ENCODE measurements at regions of chr5 and their contacts with region 1.

Region 1: DNA sequence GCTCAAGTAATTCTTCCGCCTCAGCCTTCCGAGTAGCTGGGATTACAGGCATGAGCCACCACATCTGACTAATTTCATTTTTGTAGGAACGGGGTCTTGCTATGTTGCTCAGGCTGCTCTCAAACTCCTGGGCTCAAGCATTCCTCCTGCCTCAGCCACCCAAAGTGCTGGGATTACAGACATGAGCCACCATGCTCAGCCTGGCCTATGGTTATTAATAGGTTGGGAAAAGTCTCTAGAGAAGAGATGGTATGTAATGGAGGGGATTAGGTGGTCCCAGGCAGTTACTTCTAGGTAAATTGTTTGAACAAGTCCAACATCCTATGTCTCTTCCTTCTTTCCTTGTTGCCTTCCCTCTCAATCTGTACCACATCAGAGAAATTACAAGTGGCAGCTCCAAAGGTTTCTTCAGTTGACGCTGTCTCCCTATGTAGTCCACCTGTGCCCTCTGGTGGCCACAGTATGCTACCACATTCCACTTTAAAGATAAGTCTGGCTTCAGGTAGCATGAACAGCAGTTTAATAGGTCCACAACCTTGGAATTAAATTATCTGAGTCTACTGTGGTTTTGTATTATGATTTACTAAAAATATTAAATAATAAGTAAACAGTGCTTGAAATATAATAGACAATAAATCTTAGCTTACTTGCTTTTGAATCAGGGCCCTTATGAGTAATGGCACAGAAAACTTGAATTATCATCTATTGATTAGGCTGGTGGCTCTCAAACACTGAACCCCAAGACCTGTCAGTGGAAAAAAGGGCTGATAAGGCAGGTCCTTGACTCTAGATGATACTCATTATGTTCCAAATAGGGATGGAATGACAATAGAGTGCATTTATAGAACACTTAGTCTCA is 9.7 kb downstream of the TIGD6 start:
- DNase-seq: peak; percentile 70
- CTCF ChIP-seq: peak; percentile 90

Region 2: GRCh38 chr5:149618581-149619251 is 372.0 kb before region 1 on chr5:
- CTCF ChIA-PET with region 1: interaction called, 12 read pairs
- POLR2A ChIA-PET with region 1: no interaction called
- DNase-seq: peak; percentile 70
- CTCF ChIP-seq: peak; percentile 61

Region 3: DNA sequence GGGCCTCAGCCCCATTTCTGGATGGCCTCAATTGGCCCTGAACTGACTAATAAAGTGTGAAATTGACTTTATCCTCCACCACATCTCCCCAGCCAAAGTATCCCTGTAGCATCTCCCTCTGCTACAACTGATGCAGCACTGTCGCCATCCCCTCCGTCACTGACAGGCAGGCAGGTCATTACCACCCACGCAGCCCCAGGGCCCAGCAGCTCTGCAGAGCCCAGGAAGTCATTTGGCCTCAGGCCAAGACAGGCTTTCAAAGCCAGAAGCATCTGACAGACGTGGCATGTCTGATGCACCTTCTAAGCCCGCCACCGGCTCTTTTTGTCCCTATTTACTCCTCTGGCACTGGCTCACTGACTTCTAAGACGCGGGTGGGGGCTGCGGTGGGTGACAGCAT is 344.2 kb before region 1 on chr5:
- CTCF ChIA-PET with region 1: interaction called, 12 read pairs
- POLR2A ChIA-PET with region 1: no interaction called
- DNase-seq: no peak
- CTCF ChIP-seq: no peak

Region 4: GRCh38 chr5:149828161-149828884 is 162.4 kb before region 1 on chr5:
- CTCF ChIA-PET with region 1: interaction called, 68 read pairs
- POLR2A ChIA-PET with region 1: no interaction called
- DNase-seq: peak; percentile 84
- CTCF ChIP-seq: peak; percentile 82

Region 5: DNA sequence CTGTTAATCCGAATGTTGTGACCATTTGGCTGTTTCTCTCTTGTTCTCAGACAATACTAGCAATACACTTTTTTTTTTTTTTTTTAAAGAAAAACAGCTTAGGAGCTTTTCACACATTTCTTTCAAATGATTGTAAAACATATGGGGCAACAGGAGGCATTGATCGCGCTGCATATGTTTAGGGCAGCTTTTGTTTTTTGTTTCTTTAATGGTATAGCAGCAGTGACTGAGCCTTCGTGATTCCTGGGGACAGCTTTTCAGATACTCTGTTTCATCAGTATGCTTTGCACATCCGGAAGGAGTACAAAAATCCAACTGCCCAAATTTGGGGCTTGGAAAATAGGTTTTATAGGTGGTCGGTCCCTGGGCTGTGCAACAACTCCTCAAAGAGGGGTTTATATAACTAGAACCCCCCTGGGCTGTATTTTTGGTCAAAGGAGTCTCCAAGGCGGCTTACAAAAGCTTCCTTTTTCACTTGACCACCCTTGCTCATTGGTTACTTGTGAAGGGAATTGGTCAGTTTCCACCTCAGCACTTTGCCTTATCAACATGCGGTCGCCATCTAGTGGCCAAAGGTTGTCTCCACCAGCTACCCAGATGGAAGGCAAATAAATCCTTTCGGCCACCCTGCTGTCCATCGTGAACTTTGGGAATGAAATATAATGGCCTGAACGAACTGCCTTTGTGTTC is 138.0 kb before region 1 on chr5:
- CTCF ChIA-PET with region 1: interaction called, 24 read pairs
- POLR2A ChIA-PET with region 1: no interaction called
- DNase-seq: peak; percentile 71
- CTCF ChIP-seq: peak; percentile 87

Region 6: GRCh38 chr5:149940936-149941644 is 49.7 kb before region 1 on chr5:
- CTCF ChIA-PET with region 1: no interaction called
- POLR2A ChIA-PET with region 1: no interaction called
- DNase-seq: no peak
- CTCF ChIP-seq: no peak

Region 7: GRCh38 chr5:149969181-149969930 is 21.4 kb before region 1 on chr5:
- CTCF ChIA-PET with region 1: interaction called, 14 read pairs
- POLR2A ChIA-PET with region 1: no interaction called
- DNase-seq: no peak
- CTCF ChIP-seq: no peak

Region 8: DNA sequence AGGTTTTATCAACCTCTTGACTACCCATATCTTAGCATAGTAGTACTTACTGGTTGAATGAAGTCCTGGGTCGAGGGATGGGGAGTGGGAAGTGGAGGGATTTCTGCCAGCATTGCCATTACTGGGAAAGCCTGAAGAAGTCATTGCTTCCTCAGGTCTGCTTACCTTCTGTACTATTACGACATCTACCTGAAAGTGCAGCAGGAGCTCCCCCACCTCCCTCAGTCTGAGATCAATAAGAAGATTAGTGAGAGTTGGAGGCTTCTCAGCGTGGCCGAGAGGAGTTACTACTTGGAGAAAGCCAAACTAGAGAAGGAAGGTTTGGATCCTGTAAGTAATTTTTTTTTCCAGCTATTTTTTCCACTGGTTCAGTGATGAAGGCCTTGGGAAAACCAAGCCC is 15.6 kb after region 1 on chr5:
- CTCF ChIA-PET with region 1: interaction called, 33 read pairs
- POLR2A ChIA-PET with region 1: no interaction called
- DNase-seq: no peak
- CTCF ChIP-seq: no peak

Measured in GM10248 (cell line).